WTC11 (cell line): ENCODE measurements at regions of chr17 and their contacts with region 1.

Region 1: DNA sequence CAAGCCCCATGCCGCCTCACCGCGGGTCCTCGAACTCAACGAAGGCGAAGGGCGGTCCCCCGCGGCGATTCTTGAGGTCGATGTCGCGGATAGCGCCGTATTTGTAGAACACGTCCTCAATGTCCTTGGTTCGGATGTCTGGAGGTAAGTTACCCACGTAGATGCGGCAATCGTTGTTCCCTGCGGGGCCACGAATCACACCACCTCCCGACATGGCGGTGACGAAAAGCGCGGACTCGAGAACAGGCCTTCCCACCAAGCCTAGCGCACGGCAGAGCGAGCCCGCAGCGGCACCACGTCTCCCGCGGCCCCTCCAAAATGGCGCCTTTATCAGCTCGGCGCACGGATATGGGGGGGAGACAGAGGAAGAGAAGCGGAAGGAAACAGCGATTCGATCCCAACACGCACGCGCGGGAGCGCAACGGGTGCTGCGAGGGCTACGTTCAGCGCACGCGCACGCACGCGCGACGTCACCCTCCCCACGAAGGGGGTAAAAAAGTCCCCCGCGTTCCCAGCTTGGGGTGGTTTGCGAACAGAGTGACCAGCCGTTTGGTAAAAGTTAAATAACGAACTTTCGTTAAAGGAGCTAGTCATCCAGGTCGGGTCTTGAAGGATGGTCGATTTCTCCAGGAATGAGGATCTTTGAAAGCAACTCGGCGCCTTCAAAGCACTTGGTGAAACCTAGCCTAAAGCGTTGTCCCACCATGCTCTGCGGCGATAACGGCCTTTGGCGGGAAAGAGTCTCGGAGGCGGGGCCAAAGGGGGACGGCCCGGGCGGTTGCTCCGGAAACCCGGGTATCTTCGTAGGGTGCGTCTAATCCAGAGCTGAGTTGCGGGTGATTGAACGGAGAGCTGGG is at the start of gene SRSF1:
- DNase-seq: peak; percentile 96
- ATAC-seq: peak; percentile 91
- H3K4me3 Mint-ChIP-seq: peak within 1 kb of the TSS; percentile 100
- H3K27ac Mint-ChIP-seq: peak within 1 kb of the TSS; percentile 100
- H3K4me1 Mint-ChIP-seq: peaks cover 47% of the 10 kb centered on the region
- H3K27me3 Mint-ChIP-seq: no peaks in the 10 kb centered on the region
- CTCF ChIP-seq: no peak
- total RNA-seq, gene SRSF1: 349 to 387 TPM (median 366 TPM) in 3 replicates

Region 2: DNA sequence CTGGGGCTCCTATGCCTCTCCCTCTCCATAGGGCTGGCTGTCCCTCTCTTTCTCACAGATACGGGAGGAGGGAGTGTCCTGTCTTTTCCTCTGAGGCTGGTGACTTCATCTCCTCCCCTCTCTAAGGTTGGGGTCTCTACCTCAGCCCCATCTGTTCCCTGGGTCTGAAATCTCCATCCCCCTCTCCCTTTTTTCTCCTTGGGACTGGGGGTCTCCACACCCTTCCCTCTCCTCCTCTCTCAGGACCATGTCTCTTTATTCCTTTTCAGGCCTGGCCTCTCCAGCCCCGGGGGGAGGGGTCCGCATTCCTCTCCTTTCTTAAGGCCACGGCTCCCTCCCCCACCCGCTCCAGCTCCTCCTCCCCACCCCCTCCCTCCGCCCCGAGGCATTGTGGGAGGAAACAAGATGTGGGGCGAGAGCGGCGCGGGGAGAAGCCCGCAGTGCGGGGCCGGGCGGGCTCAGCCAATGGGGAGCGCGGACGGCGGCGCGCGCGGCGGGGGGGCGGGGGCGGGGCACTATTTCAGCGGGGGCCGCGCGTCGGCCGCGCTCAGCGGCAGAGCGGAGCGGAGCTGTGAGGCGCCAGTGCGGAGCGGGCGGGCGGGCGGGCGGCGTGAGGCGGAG is 75.8 kb after region 1 on chr17 and contains the start of gene DYNLL2:
- CTCF ChIA-PET with region 1: interaction called, 11 read pairs
- POLR2A ChIA-PET with region 1: interaction called, 41 read pairs
- DNase-seq: peak; percentile 97
- ATAC-seq: peak; percentile 90
- H3K4me3 Mint-ChIP-seq: peak within 1 kb of the TSS; percentile 86
- H3K27ac Mint-ChIP-seq: peak within 1 kb of the TSS; percentile 90
- H3K4me1 Mint-ChIP-seq: peaks cover 40% of the 10 kb centered on the region
- H3K27me3 Mint-ChIP-seq: peaks cover 6% of the 10 kb centered on the region
- CTCF ChIP-seq: no peak
- total RNA-seq, gene DYNLL2: 32.1 to 34.6 TPM (median 32.2 TPM) in 3 replicates

Region 3: DNA sequence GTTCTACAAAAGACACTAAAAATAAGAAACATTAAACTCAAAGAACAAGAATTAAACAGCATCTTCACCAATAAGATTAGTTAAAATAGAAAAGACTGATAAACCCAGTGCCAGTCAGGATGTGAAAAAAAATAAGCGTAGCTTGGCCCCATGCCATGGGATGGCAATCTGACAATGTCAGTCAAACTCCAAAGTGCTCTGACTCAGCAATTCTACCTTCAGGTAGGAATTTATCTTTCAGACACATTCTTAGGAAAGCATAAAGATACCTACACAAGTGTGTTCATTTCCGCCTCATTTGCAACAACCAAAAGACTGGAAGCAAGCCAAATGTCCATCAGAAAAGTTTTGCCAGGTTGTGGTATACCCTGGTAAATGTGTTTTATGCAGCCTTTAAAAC is 282.7 kb after region 1 on chr17:
- CTCF ChIA-PET with region 1: no interaction called
- POLR2A ChIA-PET with region 1: no interaction called
- DNase-seq: no peak
- ATAC-seq: no peak
- H3K4me3 Mint-ChIP-seq: no peak overlapping the region
- H3K27ac Mint-ChIP-seq: no peak overlapping the region
- H3K4me1 Mint-ChIP-seq: peaks cover 6% of the 10 kb centered on the region
- H3K27me3 Mint-ChIP-seq: peaks cover 16% of the 10 kb centered on the region
- CTCF ChIP-seq: no peak